PC-9 (cell line): ENCODE measurements at regions of chr20 and their contacts with region 1.

Region 1: GRCh38 chr20:11544029-11544678 is 373.5 kb upstream of the BTBD3 start:
- DNase-seq: peak; percentile 49 to 62
- H3K4me3 ChIP-seq: no peak overlapping the region
- H3K27ac ChIP-seq: peak overlapping the region; percentile 11
- H3K4me1 ChIP-seq: peaks cover 13% of the 10 kb centered on the region
- H3K27me3 ChIP-seq: no peaks in the 10 kb centered on the region
- CTCF ChIP-seq: peak; percentile 81

Region 2: GRCh38 chr20:9616833-9617489 is 1927.2 kb before region 1 on chr20:
- CTCF ChIA-PET with region 1: no interaction called
- POLR2A ChIA-PET with region 1: no interaction called
- intact Hi-C with region 1: loop called (anchors 1 kb)
- DNase-seq: peak; percentile 31 to 42
- H3K4me3 ChIP-seq: no peak overlapping the region; the same call in 1 of the 2 replicates
- H3K27ac ChIP-seq: no peak overlapping the region
- H3K4me1 ChIP-seq: no peaks in the 10 kb centered on the region
- H3K27me3 ChIP-seq: no peaks in the 10 kb centered on the region; the same call in 1 of the 2 replicates
- CTCF ChIP-seq: peak; percentile 90

Region 3: GRCh38 chr20:10434467-10434831 is 1109.7 kb before region 1 on chr20:
- CTCF ChIA-PET with region 1: no interaction called
- POLR2A ChIA-PET with region 1: no interaction called
- intact Hi-C with region 1: loop called (anchors 2 kb)
- DNase-seq: peak; percentile 94 to 95
- H3K4me3 ChIP-seq: peak overlapping the region; percentile 90
- H3K27ac ChIP-seq: peak overlapping the region; percentile 96
- H3K4me1 ChIP-seq: no peaks in the 10 kb centered on the region; the same call in 1 of the 2 replicates
- H3K27me3 ChIP-seq: no peaks in the 10 kb centered on the region
- CTCF ChIP-seq: no peak

Region 4: GRCh38 chr20:11001767-11002540 is 542.2 kb before region 1 on chr20:
- CTCF ChIA-PET with region 1: no interaction called
- POLR2A ChIA-PET with region 1: no interaction called
- intact Hi-C with region 1: loop called (anchors 2 kb)
- DNase-seq: peak; percentile 79 to 96
- H3K4me3 ChIP-seq: no peak overlapping the region
- H3K27ac ChIP-seq: peak overlapping the region; percentile 94
- H3K4me1 ChIP-seq: peaks cover 27% of the 10 kb centered on the region
- H3K27me3 ChIP-seq: no peaks in the 10 kb centered on the region
- CTCF ChIP-seq: no peak

Region 5: GRCh38 chr20:11274141-11274594 is 270.0 kb before region 1 on chr20:
- CTCF ChIA-PET with region 1: no interaction called
- POLR2A ChIA-PET with region 1: no interaction called
- intact Hi-C with region 1: loop called (anchors 1 kb)
- DNase-seq: peak; percentile 30 to 61
- H3K4me3 ChIP-seq: no peak overlapping the region
- H3K27ac ChIP-seq: no peak overlapping the region
- H3K4me1 ChIP-seq: peaks cover 3% of the 10 kb centered on the region; the same call in 1 of the 2 replicates
- H3K27me3 ChIP-seq: no peaks in the 10 kb centered on the region
- CTCF ChIP-seq: peak; percentile 76

Region 6: GRCh38 chr20:11287126-11287525 is 257.0 kb before region 1 on chr20:
- CTCF ChIA-PET with region 1: no interaction called
- POLR2A ChIA-PET with region 1: no interaction called
- intact Hi-C with region 1: no loop called
- DNase-seq: no peak
- H3K4me3 ChIP-seq: no peak overlapping the region
- H3K27ac ChIP-seq: no peak overlapping the region
- H3K4me1 ChIP-seq: no peaks in the 10 kb centered on the region
- H3K27me3 ChIP-seq: no peaks in the 10 kb centered on the region
- CTCF ChIP-seq: no peak

Region 7: GRCh38 chr20:12989586-12990115 is 1445.5 kb after region 1 on chr20:
- CTCF ChIA-PET with region 1: interaction called, 16 read pairs
- POLR2A ChIA-PET with region 1: no interaction called
- intact Hi-C with region 1: no loop called
- DNase-seq: no peak
- H3K4me3 ChIP-seq: no peak overlapping the region
- H3K27ac ChIP-seq: no peak overlapping the region
- H3K4me1 ChIP-seq: peaks cover 6% of the 10 kb centered on the region
- H3K27me3 ChIP-seq: no peaks in the 10 kb centered on the region
- CTCF ChIP-seq: no peak